A673 (cell line): ENCODE measurements at regions of chr3 and their contacts with region 1.

Region 1: DNA sequence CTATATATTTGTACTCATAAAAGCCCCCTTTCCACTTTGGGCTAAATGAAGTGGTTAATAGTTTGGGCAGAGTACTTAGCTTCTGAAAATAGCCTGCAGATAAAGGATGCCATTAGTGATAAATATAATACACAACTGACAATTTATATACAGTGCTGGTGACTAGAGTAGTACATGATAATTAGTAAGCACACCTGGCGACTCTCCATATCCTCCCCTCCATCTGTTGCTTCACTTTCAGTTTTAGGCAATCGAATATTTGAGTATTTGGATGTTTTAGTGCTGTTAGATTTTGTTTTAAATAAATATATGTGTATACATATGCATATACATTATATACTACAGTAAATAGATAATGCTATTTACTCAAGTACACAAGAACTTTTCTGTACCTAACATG is 35.9 kb upstream of the CHMP2B start:
- DNase-seq: no peak
- H3K4me3 ChIP-seq: no peak overlapping the region
- H3K27ac ChIP-seq: no peak overlapping the region
- H3K4me1 ChIP-seq: no peaks in the 10 kb centered on the region
- H3K27me3 ChIP-seq: peaks cover 20% of the 10 kb centered on the region
- CTCF ChIP-seq: no peak

Region 2: DNA sequence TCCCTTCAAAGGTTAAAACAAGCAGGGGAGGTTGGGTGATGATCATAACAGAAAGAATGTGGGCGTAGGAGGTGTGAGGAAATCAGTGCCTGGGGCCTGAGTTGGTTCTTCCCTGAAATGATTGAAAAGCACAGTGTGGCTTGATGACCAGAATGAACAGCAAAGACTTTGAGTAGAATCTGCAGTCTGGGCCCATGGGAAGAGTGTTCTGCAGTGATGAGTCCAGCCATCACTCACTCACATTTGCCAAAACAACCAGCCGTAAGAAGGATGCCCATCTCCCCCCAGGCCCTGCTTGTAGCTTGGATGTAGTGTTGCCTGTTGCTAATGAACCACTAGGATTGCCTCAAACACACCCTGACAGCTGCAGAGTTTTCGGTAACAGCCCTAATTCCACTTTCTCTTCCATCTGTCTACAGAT is 268.1 kb before region 1 on chr3:
- CTCF ChIA-PET with region 1: no interaction called
- POLR2A ChIA-PET with region 1: no interaction called
- intact Hi-C with region 1: no loop called
- DNase-seq: no peak
- H3K4me3 ChIP-seq: no peak overlapping the region
- H3K27ac ChIP-seq: no peak overlapping the region
- H3K4me1 ChIP-seq: no peaks in the 10 kb centered on the region
- H3K27me3 ChIP-seq: no peaks in the 10 kb centered on the region
- CTCF ChIP-seq: no peak

Region 3: GRCh38 chr3:87025661-87026635 is 165.2 kb before region 1 on chr3:
- CTCF ChIA-PET with region 1: no interaction called
- POLR2A ChIA-PET with region 1: no interaction called
- intact Hi-C with region 1: no loop called
- DNase-seq: no peak
- H3K4me3 ChIP-seq: no peak overlapping the region
- H3K27ac ChIP-seq: no peak overlapping the region
- H3K4me1 ChIP-seq: no peaks in the 10 kb centered on the region
- H3K27me3 ChIP-seq: no peaks in the 10 kb centered on the region
- CTCF ChIP-seq: no peak

Region 4: GRCh38 chr3:87248831-87249230 is 57.7 kb after region 1 on chr3:
- CTCF ChIA-PET with region 1: interaction called, 11 read pairs
- POLR2A ChIA-PET with region 1: no interaction called
- intact Hi-C with region 1: no loop called
- DNase-seq: no peak
- H3K4me3 ChIP-seq: no peak overlapping the region
- H3K27ac ChIP-seq: no peak overlapping the region
- H3K4me1 ChIP-seq: no peaks in the 10 kb centered on the region
- H3K27me3 ChIP-seq: no peaks in the 10 kb centered on the region
- CTCF ChIP-seq: no peak

Region 5: GRCh38 chr3:87298111-87298718 is 107.0 kb after region 1 on chr3:
- CTCF ChIA-PET with region 1: no interaction called
- POLR2A ChIA-PET with region 1: no interaction called
- intact Hi-C with region 1: no loop called
- DNase-seq: peak; percentile 84
- H3K4me3 ChIP-seq: no peak overlapping the region
- H3K27ac ChIP-seq: peak overlapping the region; percentile 17
- H3K4me1 ChIP-seq: peaks cover 43% of the 10 kb centered on the region
- H3K27me3 ChIP-seq: no peaks in the 10 kb centered on the region
- CTCF ChIP-seq: peak; percentile 85